ENCODE measurements at regions of chr6 and their contacts with region 1.

Region 1: DNA sequence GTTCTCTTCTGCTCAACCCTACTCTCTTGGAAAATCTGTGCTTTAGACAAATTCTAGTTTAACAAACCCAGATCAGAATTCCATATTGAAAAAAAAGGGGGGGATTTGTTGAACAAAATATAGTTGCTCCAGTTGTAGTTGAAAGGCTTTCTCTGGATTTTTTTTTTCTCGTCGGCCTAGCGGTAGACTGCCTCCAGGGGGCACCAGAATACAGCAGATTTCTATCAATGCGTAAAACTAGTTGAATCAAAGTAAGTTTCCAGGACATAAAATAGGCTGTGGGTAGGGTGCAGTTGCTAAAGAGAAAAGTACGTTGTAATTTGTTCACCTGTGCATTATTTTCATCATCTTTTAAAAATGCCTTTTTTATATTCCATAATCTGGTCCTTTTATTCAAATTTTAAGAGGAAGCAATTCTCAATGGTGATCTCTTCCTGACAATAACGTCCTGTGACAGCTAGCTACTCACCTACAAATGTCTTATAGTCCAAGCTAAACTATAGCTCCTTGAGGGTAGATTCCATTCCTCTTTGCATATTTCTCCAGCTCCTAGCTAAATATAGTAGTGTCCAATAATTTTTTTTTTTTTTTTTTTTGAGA is 105.4 kb downstream of the PERP start:
- DNase-seq: peak; percentile 74
- ATAC-seq: peak; percentile 36
- H3K4me3 Mint-ChIP-seq: no peak overlapping the region
- H3K27ac Mint-ChIP-seq: no peak overlapping the region
- H3K4me1 Mint-ChIP-seq: peaks cover 14% of the 10 kb centered on the region
- H3K27me3 Mint-ChIP-seq: peaks cover 2% of the 10 kb centered on the region

Region 2: GRCh38 chr6:137856138-137856898 is 145.5 kb before region 1 on chr6:
- CTCF ChIA-PET with region 1: no interaction called
- POLR2A ChIA-PET with region 1: no interaction called
- DNase-seq: peak; percentile 4
- ATAC-seq: no peak
- H3K4me3 Mint-ChIP-seq: no peak overlapping the region
- H3K27ac Mint-ChIP-seq: no peak overlapping the region
- H3K4me1 Mint-ChIP-seq: peaks cover under 1% of the 10 kb centered on the region
- H3K27me3 Mint-ChIP-seq: no peaks in the 10 kb centered on the region

Region 3: GRCh38 chr6:137873273-137873762 is 128.5 kb before region 1 on chr6:
- CTCF ChIA-PET with region 1: interaction called, 51 read pairs
- POLR2A ChIA-PET with region 1: interaction called, 4 read pairs
- DNase-seq: peak; percentile 44
- ATAC-seq: no peak
- H3K4me3 Mint-ChIP-seq: peak overlapping the region; percentile 94
- H3K27ac Mint-ChIP-seq: peak overlapping the region; percentile 42
- H3K4me1 Mint-ChIP-seq: peaks cover 83% of the 10 kb centered on the region
- H3K27me3 Mint-ChIP-seq: no peaks in the 10 kb centered on the region

Region 4: DNA sequence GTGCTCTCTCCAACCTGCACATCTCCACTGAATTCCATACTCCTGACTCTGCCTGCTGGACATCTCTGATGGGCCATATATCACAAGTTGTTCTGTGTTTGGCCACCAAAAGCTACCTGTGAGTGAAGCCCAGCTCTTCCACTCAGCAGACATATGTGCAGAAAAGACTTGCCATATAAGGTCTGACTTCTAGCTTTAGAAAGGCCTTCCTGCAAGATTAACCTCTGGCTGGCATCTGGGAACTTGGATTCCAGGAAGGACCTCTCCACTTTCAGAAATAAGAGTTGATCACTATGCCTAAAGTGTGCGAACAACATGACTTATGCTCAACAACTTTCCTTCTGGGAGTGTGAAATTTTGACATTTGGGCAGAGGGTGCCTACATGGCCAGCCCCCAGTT is 21.1 kb before region 1 on chr6:
- CTCF ChIA-PET with region 1: interaction called, 26 read pairs
- POLR2A ChIA-PET with region 1: no interaction called
- DNase-seq: no peak
- ATAC-seq: no peak
- H3K4me3 Mint-ChIP-seq: no peak overlapping the region
- H3K27ac Mint-ChIP-seq: no peak overlapping the region
- H3K4me1 Mint-ChIP-seq: peaks cover 20% of the 10 kb centered on the region
- H3K27me3 Mint-ChIP-seq: no peaks in the 10 kb centered on the region

Region 5: GRCh38 chr6:138012682-138013081 is 10.8 kb after region 1 on chr6:
- CTCF ChIA-PET with region 1: interaction called, 17 read pairs
- POLR2A ChIA-PET with region 1: no interaction called
- DNase-seq: no peak
- ATAC-seq: no peak
- H3K4me3 Mint-ChIP-seq: no peak overlapping the region
- H3K27ac Mint-ChIP-seq: no peak overlapping the region
- H3K4me1 Mint-ChIP-seq: no peaks in the 10 kb centered on the region
- H3K27me3 Mint-ChIP-seq: peaks cover 6% of the 10 kb centered on the region

Region 6: GRCh38 chr6:138115877-138116660 is 114.2 kb after region 1 on chr6:
- CTCF ChIA-PET with region 1: interaction called, 48 read pairs
- POLR2A ChIA-PET with region 1: no interaction called
- DNase-seq: peak; percentile 58
- ATAC-seq: peak; percentile 83
- H3K4me3 Mint-ChIP-seq: no peak overlapping the region
- H3K27ac Mint-ChIP-seq: no peak overlapping the region
- H3K4me1 Mint-ChIP-seq: peaks cover 6% of the 10 kb centered on the region
- H3K27me3 Mint-ChIP-seq: peaks cover 49% of the 10 kb centered on the region

Measured in activated CD8-positive, alpha-beta T cell treated with anti-CD3 and anti-CD28 coated beads, Interleukin-2, amount 10 ng/mL, durations not matched to agents 7 days and 5 days (primary cell).